Prostate gland (tissue), 2 donors: ENCODE measurements at regions of chr1 and their contacts with region 1.

Region 1: DNA sequence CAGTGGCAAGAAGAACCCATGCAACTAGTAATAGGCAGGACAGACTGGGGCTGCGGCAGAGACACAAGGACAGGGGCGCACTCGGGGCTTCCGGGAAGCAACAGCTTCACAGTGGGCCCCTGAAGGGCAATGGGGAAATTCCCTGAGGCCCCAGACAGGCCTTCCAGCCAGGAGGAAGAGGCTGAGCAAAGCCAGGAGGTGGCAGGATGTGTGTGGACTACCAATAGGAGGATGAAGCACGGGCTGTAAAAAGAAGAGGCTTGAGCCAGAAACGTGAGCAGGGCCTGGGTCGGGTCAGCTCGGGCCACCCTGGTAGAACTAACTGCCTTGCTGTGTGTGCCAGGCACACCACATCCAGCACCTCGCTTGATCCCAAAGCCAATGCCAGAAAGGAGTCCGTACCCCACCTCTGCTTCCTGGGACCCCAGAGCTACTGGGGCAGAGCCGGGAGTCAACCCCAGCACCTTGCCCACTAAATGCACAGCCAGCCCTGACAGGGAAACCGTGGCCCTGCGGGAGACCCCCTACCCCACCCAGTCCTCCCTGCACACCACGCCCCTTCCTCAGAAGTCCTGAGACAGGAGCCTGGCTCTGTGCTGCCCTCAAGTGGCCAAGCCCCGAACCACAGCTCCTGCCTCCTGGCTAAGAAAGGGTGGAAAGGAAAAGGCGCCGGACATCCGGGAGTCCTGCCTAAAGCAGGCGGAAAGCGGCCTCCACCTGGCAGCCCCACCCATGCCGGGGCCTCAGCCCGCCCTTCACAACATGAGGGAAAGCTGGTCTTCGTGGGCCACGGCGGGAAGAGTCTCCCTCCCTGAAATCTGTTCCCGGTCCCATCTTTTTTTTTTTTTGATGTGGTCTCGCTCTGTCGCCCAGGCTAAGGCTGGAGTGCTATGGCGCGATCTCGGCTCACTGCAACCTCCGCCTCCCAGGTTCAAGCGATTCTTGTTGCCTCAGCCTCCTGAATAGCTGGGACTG is 33.7 kb downstream of the TTC39A start:
- DNase-seq: peak; percentile 78
- H3K4me3 ChIP-seq: peak overlapping the region; percentile 20 to 21
- H3K27ac ChIP-seq: peak overlapping the region; percentile 17 to 21
- H3K4me1 ChIP-seq: no peaks in the 10 kb centered on the region
- H3K27me3 ChIP-seq: no peaks in the 10 kb centered on the region
- CTCF ChIP-seq: peak; percentile 90 to 93 (median 92)
- POLR2A ChIP-seq: no peak

Region 2: GRCh38 chr1:51192213-51192843 is 104.3 kb before region 1 on chr1:
- intact Hi-C with region 1: loop called (anchors 5 kb)
- DNase-seq: peak; percentile 57
- H3K4me3 ChIP-seq: no peak overlapping the region
- H3K27ac ChIP-seq: no peak overlapping the region
- H3K4me1 ChIP-seq: no peaks in the 10 kb centered on the region
- H3K27me3 ChIP-seq: no peaks in the 10 kb centered on the region
- CTCF ChIP-seq: peak; percentile 31 to 60 (median 56)
- POLR2A ChIP-seq: no peak

Region 3: DNA sequence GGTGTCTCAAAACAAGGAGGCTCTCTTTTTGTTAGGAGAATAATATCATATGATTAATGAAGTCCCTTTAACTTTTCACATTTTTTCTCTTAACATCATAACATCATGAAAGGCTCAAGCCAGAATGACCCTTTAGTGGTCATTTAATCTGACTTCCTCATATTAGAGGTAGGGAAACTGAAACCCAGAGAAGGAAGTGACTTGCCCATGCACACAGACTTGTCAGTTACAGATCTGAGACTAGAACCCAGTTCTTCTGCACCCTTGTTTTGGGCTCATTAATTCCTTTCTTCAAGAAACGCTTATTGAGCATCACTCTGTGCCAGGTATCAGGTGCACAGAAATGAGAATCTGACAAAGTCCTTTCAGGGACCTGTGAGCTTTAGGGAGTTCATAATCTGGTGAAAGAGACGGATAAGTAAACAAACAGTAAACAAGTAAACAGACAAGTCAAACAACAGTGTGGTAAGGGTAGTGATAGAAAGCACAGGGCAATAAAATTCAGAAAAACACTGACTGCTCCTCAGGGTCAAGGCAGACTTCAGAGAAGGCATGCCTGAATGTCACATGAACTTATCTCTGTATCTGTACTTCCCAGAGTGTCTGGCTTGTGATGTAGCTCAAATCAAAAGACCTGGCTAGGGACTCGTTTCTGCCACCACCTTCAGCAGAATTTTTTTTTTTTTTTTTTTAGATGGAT is 281.9 kb after region 1 on chr1:
- intact Hi-C with region 1: no loop called
- DNase-seq: no peak
- H3K4me3 ChIP-seq: no peak overlapping the region
- H3K27ac ChIP-seq: no peak overlapping the region
- H3K4me1 ChIP-seq: peaks cover 3% of the 10 kb centered on the region
- H3K27me3 ChIP-seq: no peaks in the 10 kb centered on the region
- CTCF ChIP-seq: no peak
- POLR2A ChIP-seq: no peak

Region 4: DNA sequence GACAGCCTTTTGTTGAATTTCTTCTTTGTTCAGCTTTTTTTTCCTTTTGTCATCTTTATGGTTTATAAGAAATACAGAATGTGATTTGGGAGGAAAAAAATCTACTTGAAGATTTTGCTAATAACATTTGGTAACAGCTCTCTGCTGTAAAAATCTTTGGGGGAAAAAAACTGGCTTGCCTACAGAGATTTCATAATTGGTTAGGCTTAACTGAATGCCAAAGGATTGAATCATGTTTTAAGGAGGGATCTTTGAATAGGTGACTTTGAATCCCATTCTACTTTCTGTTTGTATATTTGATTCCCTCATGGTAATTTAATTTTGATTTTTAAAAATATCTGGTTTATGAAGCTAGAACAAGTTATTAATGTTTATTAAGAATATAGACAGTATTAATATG is 762.7 kb after region 1 on chr1:
- intact Hi-C with region 1: no loop called
- DNase-seq: no peak
- H3K4me3 ChIP-seq: no peak overlapping the region
- H3K27ac ChIP-seq: no peak overlapping the region
- H3K4me1 ChIP-seq: peaks cover 6% of the 10 kb centered on the region
- H3K27me3 ChIP-seq: no peaks in the 10 kb centered on the region
- CTCF ChIP-seq: no peak
- POLR2A ChIP-seq: no peak